ENCODE measurements at regions of chr10 and their contacts with region 1.

Region 1: DNA sequence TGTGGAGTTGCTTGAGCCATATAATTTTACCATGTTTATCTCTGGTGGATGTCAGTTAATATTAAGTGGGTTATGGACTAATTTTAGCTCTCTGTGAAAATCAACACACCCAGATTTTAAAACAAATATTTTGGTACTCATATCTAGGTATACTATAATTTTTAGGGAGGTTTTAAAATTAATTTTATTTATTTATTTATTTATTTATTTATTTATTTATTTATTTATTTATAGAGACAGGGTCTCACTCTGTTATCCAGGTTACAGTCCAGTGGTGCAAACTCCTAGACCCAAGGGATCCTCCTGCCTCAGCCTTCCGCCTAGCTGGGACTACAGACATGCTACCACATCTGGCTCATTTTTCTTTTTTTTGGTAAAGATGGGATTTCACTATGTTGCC is 7.3 kb upstream of the CREM start:
- DNase-seq: no peak
- ATAC-seq: no peak
- H3K4me3 ChIP-seq: no peak overlapping the region
- H3K27ac ChIP-seq: no peak overlapping the region
- H3K4me1 ChIP-seq: no peaks in the 10 kb centered on the region
- H3K27me3 ChIP-seq: no peaks in the 10 kb centered on the region
- CTCF ChIP-seq: no peak
- EP300 ChIP-seq: no peak
- POLR2A ChIP-seq: no peak
- RAD21 ChIP-seq: no peak

Region 2: DNA sequence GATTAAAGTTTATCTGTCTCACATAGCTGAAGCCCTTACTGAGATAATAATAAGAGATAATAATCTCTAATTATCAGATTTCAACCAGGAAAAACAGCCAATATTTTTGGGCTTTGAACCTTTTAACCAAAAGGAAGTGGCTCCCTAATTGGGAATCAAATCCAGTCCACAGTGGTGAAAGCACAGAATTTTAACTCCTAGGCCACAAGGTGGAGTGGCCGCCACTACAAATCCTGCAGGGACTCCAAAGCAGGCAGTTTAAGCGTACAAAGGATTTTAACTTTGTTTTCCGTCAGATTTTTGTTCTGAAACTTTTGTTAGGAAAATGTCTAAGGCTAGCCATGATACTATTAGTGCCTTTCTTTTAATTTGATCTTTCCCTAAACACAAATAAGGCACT is 117.4 kb after region 1 on chr10:
- CTCF ChIA-PET with region 1: interaction called, 27 read pairs
- POLR2A ChIA-PET with region 1: no interaction called
- RAD21 ChIA-PET with region 1: interaction called, 5 read pairs
- SMC1A ChIA-PET with region 1: interaction called, 6 read pairs
- in situ Hi-C with region 1: no loop called
- intact Hi-C with region 1: no loop called
- DNase-seq: no peak
- ATAC-seq: no peak
- H3K4me3 ChIP-seq: no peak overlapping the region
- H3K27ac ChIP-seq: no peak overlapping the region
- H3K4me1 ChIP-seq: no peaks in the 10 kb centered on the region
- H3K27me3 ChIP-seq: no peaks in the 10 kb centered on the region
- CTCF ChIP-seq: peak in 2 of 3 experiments; percentile 15 to 28; a peak in 2 of 6 replicates
- EP300 ChIP-seq: no peak
- POLR2A ChIP-seq: no peak
- RAD21 ChIP-seq: peak; percentile 46

Region 3: DNA sequence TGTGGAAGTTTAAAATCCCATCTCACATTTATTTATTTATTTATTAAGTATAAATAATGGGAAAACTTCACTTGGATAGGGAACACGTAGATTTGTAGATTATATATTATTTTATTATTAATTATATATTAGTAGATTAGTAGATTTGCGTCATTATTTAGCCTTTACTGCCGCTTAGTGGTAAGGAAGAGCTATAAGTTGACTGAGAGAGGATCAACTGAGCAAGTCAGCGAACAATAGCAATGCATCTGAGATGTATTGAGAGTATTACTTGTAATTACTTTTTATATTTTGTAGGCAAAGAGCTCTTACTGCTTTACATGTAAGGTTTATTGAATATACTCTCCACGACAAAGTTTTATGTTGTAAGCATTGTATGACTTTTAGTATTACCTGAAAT is 1761.5 kb after region 1 on chr10:
- CTCF ChIA-PET with region 1: interaction called, 10 read pairs
- POLR2A ChIA-PET with region 1: no interaction called
- RAD21 ChIA-PET with region 1: interaction called, 4 read pairs
- SMC1A ChIA-PET with region 1: interaction called, 3 read pairs
- in situ Hi-C with region 1: loop called (anchors 10 kb)
- intact Hi-C with region 1: no loop called
- DNase-seq: no peak
- ATAC-seq: 0 out of 3 replicates have a peak, but pooled peaks have one; percentile 48
- H3K4me3 ChIP-seq: no peak overlapping the region
- H3K27ac ChIP-seq: no peak overlapping the region
- H3K4me1 ChIP-seq: no peaks in the 10 kb centered on the region
- H3K27me3 ChIP-seq: no peaks in the 10 kb centered on the region
- CTCF ChIP-seq: peak; percentile 39 to 54 (median 45); a peak in 5 of 6 replicates
- EP300 ChIP-seq: no peak
- POLR2A ChIP-seq: no peak
- RAD21 ChIP-seq: peak; percentile 64